ENCODE measurements at regions of chr19 and their contacts with region 1.

Region 1: GRCh38 chr19:5048091-5048726 is 79.3 kb downstream of the KDM4B start:
- DNase-seq: peak; percentile 75
- ATAC-seq: peak; percentile 91
- H3K4me3 Mint-ChIP-seq: no peak overlapping the region
- H3K27ac Mint-ChIP-seq: no peak overlapping the region
- H3K4me1 Mint-ChIP-seq: peaks cover 2% of the 10 kb centered on the region
- H3K27me3 Mint-ChIP-seq: no peaks in the 10 kb centered on the region
- CTCF ChIP-seq: peak; percentile 97

Region 2: GRCh38 chr19:5154129-5154798 is 106.1 kb after region 1 on chr19:
- CTCF ChIA-PET with region 1: interaction called, 7 read pairs
- POLR2A ChIA-PET with region 1: interaction called, 4 read pairs
- intact Hi-C with region 1: loop called (anchors 5 kb)
- DNase-seq: peak; percentile 71
- ATAC-seq: peak; percentile 77
- H3K4me3 Mint-ChIP-seq: no peak overlapping the region
- H3K27ac Mint-ChIP-seq: no peak overlapping the region
- H3K4me1 Mint-ChIP-seq: peaks cover 2% of the 10 kb centered on the region
- H3K27me3 Mint-ChIP-seq: no peaks in the 10 kb centered on the region
- CTCF ChIP-seq: peak; percentile 72

Region 3: GRCh38 chr19:5170329-5170745 is 122.1 kb after region 1 on chr19:
- CTCF ChIA-PET with region 1: interaction called, 10 read pairs
- POLR2A ChIA-PET with region 1: no interaction called
- intact Hi-C with region 1: no loop called
- DNase-seq: peak; percentile 76
- ATAC-seq: peak; percentile 60
- H3K4me3 Mint-ChIP-seq: no peak overlapping the region
- H3K27ac Mint-ChIP-seq: no peak overlapping the region
- H3K4me1 Mint-ChIP-seq: no peaks in the 10 kb centered on the region
- H3K27me3 Mint-ChIP-seq: no peaks in the 10 kb centered on the region
- CTCF ChIP-seq: peak; percentile 76

Measured in activated CD8-positive, alpha-beta T cell treated with anti-CD3 and anti-CD28 coated beads for 36 hours (primary cell).